Naive thymus-derived CD4-positive, alpha-beta T cell (primary cell): ENCODE measurements at regions of chr18 and their contacts with region 1.

Region 1: GRCh38 chr18:29078273-29078672 is 901.3 kb upstream of the CDH2 start:
- DNase-seq: no peak
- ATAC-seq: no peak
- H3K4me3 ChIP-seq: no peak overlapping the region
- H3K4me3 Mint-ChIP-seq: no peak overlapping the region
- H3K27ac ChIP-seq: no peak overlapping the region
- H3K27ac Mint-ChIP-seq: no peak overlapping the region
- H3K4me1 ChIP-seq: no peaks in the 10 kb centered on the region
- H3K4me1 Mint-ChIP-seq: no peaks in the 10 kb centered on the region
- H3K27me3 ChIP-seq: no peaks in the 10 kb centered on the region
- H3K27me3 Mint-ChIP-seq: no peaks in the 10 kb centered on the region

Region 2: DNA sequence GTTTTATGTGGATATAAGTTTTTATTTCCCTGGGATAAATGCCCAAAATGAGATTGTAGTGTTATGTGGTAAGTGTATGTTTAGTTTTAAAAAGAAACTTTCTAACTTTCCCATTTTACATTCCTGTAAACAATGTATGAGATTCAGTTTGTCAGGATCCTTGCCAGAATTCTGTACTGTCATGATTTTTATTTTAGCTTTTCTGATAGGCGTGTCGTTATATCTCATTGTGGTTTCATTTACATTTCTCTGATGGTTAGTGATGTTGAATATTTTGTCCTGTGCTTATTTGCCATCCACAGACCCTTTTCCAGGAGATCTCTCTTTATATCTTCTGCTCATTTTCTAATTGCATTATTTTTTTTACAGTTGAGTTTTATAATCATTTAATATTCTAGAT is 655.7 kb before region 1 on chr18:
- CTCF ChIA-PET with region 1: no interaction called
- POLR2A ChIA-PET with region 1: no interaction called
- intact Hi-C with region 1: no loop called
- DNase-seq: no peak
- ATAC-seq: no peak
- H3K4me3 ChIP-seq: no peak overlapping the region
- H3K4me3 Mint-ChIP-seq: no peak overlapping the region
- H3K27ac ChIP-seq: no peak overlapping the region
- H3K27ac Mint-ChIP-seq: no peak overlapping the region
- H3K4me1 ChIP-seq: no peaks in the 10 kb centered on the region
- H3K4me1 Mint-ChIP-seq: no peaks in the 10 kb centered on the region
- H3K27me3 ChIP-seq: no peaks in the 10 kb centered on the region
- H3K27me3 Mint-ChIP-seq: no peaks in the 10 kb centered on the region

Region 3: DNA sequence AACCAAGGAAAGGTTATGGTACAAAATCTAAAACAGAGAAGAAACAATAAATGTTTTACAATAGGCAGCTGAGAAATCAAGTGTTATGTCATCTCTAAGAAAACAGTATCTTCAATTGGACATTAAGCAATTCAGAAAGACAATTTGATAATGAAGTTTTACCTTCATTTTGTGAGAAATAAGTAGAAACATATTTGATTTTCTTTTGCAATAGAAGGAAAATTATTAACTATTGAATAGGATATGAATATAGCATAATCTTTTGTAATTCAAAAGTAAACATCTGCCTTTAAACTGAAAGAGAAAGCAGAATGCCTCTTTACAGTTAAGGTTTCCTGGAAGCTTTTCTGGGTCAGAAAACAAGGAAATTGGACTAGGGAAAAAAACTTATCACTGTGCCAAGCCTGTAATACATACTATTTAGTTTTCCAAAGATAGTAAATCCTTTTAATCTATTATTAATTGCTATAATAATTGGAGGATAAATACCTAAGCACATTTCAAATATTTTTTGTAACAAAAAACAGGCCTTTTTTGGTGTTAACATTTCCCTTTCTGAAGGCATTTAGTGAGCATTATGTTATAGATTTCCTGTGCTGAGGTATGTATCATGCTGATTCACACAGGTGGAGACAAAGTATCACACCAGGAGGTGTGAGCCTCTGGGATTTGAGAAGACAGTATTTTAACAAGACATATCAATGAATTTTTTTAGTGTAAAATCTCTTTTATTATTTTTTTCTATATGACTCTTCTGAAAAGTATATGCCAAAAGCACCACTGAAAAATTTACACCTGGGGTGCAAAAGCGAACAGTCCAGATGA is 45.6 kb after region 1 on chr18:
- CTCF ChIA-PET with region 1: no interaction called
- POLR2A ChIA-PET with region 1: no interaction called
- intact Hi-C with region 1: loop called in 1 of 2 experiments (anchors 5 kb)
- DNase-seq: no peak
- ATAC-seq: no peak
- H3K4me3 ChIP-seq: no peak overlapping the region
- H3K4me3 Mint-ChIP-seq: no peak overlapping the region
- H3K27ac ChIP-seq: no peak overlapping the region
- H3K27ac Mint-ChIP-seq: no peak overlapping the region
- H3K4me1 ChIP-seq: no peaks in the 10 kb centered on the region
- H3K4me1 Mint-ChIP-seq: peaks cover 0 to 1% (median 0%) of the 10 kb centered on the region in 7 donors
- H3K27me3 ChIP-seq: no peaks in the 10 kb centered on the region
- H3K27me3 Mint-ChIP-seq: no peaks in the 10 kb centered on the region

Region 4: DNA sequence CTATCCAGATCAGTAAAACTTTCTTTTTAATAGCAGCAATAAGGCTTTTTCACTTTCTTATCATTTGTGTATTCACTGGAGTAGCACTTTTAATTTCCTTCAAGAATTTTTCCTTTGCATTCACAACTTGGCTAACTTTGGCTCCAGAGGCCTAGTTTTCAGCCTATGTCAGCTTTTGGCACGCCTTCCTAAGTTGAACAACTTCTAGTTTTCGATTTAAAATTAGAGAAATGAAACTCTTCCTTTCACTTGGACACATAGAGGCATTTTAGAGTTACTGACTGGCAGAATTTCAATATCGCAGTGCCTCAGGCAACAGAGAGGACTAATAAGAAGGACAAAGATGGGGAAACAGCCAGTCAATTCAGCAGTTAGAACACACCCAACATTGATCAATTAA is 1386.8 kb after region 1 on chr18:
- CTCF ChIA-PET with region 1: no interaction called
- POLR2A ChIA-PET with region 1: no interaction called
- intact Hi-C with region 1: no loop called
- DNase-seq: no peak
- ATAC-seq: no peak
- H3K4me3 ChIP-seq: no peak overlapping the region
- H3K4me3 Mint-ChIP-seq: no peak overlapping the region
- H3K27ac ChIP-seq: no peak overlapping the region
- H3K27ac Mint-ChIP-seq: no peak overlapping the region
- H3K4me1 ChIP-seq: no peaks in the 10 kb centered on the region
- H3K4me1 Mint-ChIP-seq: no peaks in the 10 kb centered on the region
- H3K27me3 ChIP-seq: no peaks in the 10 kb centered on the region
- H3K27me3 Mint-ChIP-seq: no peaks in the 10 kb centered on the region